Colonic mucosa (tissue), 4 donors: ENCODE measurements at regions of chr1 and their contacts with region 1.

Region 1: DNA sequence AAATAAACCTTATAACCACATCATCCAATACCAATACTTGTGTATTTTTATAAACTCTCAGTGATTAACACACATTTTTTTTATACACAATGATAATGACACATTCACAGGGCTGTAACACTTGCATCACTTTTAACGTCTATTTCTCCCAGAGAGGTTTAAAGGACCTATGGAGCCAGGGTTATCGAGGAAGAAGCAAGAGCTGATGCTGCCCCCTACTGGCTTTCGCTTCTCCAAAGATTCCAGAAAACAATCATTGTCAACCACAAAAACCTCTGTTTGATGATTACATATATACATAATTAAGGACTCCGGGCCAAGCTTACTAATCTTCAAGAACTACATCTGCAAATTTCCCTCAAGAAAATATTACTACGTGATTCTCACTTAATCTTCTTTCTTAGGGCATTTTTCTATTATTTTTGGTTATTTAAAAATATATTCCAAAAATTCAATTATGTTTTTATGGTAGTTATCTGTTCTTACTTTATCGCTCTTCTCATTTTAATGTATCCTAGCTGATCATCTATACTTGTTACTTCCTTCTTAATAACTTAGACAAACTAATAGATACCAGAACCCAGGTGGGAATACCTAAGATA is 214.5 kb downstream of the VAV3 start:
- DNase-seq: peak; percentile 82
- H3K4me3 ChIP-seq: no peak overlapping the region
- H3K27ac ChIP-seq: no peak overlapping the region
- H3K4me1 ChIP-seq: no peaks in the 10 kb centered on the region
- H3K27me3 ChIP-seq: no peaks in the 10 kb centered on the region
- CTCF ChIP-seq: peak; percentile 71

Region 2: GRCh38 chr1:107277022-107277421 is 473.4 kb before region 1 on chr1:
- intact Hi-C with region 1: loop called (anchors 5 kb)
- DNase-seq: peak; percentile 41
- H3K4me3 ChIP-seq: no peak overlapping the region
- H3K27ac ChIP-seq: no peak overlapping the region
- H3K4me1 ChIP-seq: no peaks in the 10 kb centered on the region
- H3K27me3 ChIP-seq: no peaks in the 10 kb centered on the region
- CTCF ChIP-seq: peak; percentile 29

Region 3: GRCh38 chr1:107430540-107431228 is 319.8 kb before region 1 on chr1:
- intact Hi-C with region 1: loop called (anchors 2 kb)
- DNase-seq: peak; percentile 48
- H3K4me3 ChIP-seq: no peak overlapping the region
- H3K27ac ChIP-seq: no peak overlapping the region
- H3K4me1 ChIP-seq: no peaks in the 10 kb centered on the region
- H3K27me3 ChIP-seq: no peaks in the 10 kb centered on the region
- CTCF ChIP-seq: peak; percentile 61

Region 4: DNA sequence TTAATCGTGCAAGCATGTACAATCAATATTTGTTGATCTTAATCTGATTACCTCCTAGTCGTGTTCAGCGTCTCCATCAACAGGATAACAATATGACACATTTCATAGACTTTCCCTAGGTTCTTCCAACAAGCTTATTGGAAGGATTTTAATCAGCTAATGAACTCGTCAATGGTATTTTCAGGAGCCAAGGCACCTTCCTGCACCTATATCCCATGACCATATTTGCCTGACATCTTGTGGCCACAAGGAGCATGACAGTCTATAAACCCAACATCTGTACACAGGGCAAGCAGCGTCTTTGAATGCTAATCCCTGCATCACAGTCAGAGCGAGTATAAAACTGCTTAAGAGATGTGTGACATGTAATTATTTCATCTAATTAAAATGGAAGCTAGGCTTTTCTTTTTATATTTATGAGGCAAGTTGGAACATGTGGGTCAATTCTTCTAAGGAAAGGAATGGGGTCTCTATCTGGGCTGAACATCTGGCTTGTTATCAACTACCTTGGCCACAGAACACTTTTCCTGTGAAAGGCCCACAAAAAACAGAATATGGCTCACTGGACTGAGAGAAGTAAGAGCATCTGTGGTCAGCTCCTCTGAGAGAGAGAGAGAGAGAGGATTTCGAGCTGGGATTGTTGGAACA is 220.8 kb before region 1 on chr1:
- intact Hi-C with region 1: loop called (anchors 5 kb)
- DNase-seq: peak; percentile 32
- H3K4me3 ChIP-seq: no peak overlapping the region
- H3K27ac ChIP-seq: no peak overlapping the region
- H3K4me1 ChIP-seq: no peaks in the 10 kb centered on the region
- H3K27me3 ChIP-seq: no peaks in the 10 kb centered on the region
- CTCF ChIP-seq: peak; percentile 58

Region 5: GRCh38 chr1:107692580-107693345 is 57.7 kb before region 1 on chr1:
- intact Hi-C with region 1: loop called (anchors 10 kb)
- DNase-seq: no peak
- H3K4me3 ChIP-seq: no peak overlapping the region
- H3K27ac ChIP-seq: no peak overlapping the region
- H3K4me1 ChIP-seq: no peaks in the 10 kb centered on the region
- H3K27me3 ChIP-seq: no peaks in the 10 kb centered on the region
- CTCF ChIP-seq: no peak